ENCODE measurements at regions of chr12 and their contacts with region 1.

Region 1: DNA sequence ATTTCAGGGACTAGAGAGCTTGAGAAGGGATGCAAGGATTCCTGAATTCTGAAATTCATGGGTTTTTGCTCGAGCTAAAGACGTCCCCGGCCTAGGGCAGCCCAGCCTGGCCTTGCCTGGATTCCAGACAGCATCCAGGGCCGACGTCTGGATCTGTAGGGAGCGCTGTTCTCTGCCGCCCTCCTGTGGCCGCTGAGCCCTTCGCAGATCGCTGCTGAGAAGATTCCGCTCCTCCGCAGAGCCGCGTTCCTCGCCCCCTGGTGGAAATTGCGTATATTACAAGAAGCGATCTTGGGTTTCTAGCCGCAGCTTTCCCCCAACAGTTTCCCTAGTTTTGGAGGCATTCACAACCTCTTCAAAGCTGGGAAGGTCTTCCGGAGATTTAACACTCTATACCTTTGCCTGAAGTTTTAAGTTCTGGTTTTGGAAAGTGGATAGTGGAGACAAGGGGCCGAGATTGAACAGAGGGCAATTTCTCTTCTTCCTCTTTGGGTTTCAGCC is 5.1 kb downstream of the CISTR start:
- ATAC-seq: peak; percentile 81 to 96 (median 87)
- H3K4me3 ChIP-seq: no peak overlapping the region
- H3K27ac ChIP-seq: no peak overlapping the region
- H3K4me1 ChIP-seq: peaks cover 31 to 44% of the 10 kb centered on the region in 2 donors

Region 2: DNA sequence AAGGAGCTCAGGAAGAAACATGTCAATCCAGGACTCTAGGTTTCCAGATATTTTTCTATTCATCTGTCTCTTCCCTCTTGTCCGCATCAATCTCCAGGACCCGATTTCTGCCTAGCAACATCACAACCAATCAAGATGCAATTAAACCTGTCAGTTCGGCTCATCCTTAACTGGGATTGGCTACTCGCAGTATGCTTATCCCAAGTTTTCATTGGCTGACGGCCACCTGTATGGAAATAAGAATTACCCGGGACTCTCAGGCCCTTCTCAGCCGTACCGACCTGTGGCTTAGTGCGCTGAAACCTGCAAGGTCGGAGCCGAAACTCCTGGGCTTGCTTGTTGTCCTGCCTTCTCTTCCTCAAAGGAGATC is 50.4 kb before region 1 on chr12:
- in situ Hi-C with region 1: loop called in 5 of 9 experiments (anchors 5 to 10 kb)
- ATAC-seq: peak; percentile 60 to 83 (median 66)
- H3K4me3 ChIP-seq: peak overlapping the region in 4 of 5 donors; percentile 6 to 27 (median 16)
- H3K27ac ChIP-seq: no peak overlapping the region
- H3K4me1 ChIP-seq: peaks cover 29 to 42% of the 10 kb centered on the region in 2 donors

Region 3: GRCh38 chr12:53701518-53702260 is 45.0 kb before region 1 on chr12:
- in situ Hi-C with region 1: loop called in 5 of 9 experiments (anchors 5 to 10 kb)
- ATAC-seq: peak; percentile 82 to 100 (median 90)
- H3K4me3 ChIP-seq: no peak overlapping the region
- H3K27ac ChIP-seq: no peak overlapping the region
- H3K4me1 ChIP-seq: peaks cover 6 to 18% of the 10 kb centered on the region in 2 donors

Measured in motor neuron (in vitro differentiated cells).